AG04450 (cell line): ENCODE measurements at regions of chr10 and their contacts with region 1.

Region 1: GRCh38 chr10:63720072-63720537 is 198.9 kb downstream of the REEP3 start:
- DNase-seq: no peak
- H3K4me3 ChIP-seq: no peak overlapping the region
- H3K27ac ChIP-seq: no peak overlapping the region
- H3K27me3 ChIP-seq: no peaks in the 10 kb centered on the region
- CTCF ChIP-seq: peak; percentile 98

Region 2: DNA sequence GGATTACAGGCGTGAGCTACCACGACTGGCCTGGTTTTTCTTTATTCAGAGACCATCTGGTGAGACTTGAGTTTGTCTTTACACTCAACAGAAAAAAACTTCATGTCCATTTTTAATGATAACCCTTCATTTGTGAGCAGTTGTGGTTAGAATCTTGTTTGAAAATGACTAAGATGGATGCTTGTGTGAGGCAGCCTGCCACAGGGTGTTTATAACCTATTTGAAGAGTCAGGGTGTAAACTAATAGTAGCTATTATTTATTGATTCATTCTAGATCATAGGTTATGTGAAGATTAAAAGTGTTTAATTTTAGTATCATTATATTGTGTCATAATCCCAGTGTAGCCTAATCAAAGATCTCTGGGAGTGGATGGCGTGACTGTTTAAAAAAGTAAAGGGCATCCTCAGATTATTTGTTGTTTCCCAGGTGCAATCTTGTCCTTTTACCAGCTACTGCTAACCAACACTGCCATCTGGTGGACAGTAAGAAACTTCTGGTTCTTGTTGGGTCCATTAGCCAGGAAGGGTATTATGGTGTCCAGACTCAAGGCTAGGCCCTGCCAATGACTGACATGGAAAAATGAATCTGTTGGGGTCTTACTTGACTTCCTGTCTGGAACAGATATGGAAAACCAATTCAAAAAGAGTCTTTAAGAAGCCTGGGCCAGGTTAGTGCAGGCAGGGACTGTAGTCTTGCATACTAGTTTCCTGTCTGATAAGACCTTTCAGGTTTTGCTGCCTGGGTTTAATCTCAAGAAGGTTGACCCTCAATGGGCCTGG is 562.1 kb before region 1 on chr10:
- CTCF ChIA-PET with region 1: interaction called, 363 read pairs
- POLR2A ChIA-PET with region 1: no interaction called
- DNase-seq: peak; percentile 86
- H3K4me3 ChIP-seq: no peak overlapping the region
- H3K27ac ChIP-seq: no peak overlapping the region
- H3K27me3 ChIP-seq: no peaks in the 10 kb centered on the region
- CTCF ChIP-seq: peak; percentile 79

Region 3: GRCh38 chr10:63197344-63198106 is 522.6 kb before region 1 on chr10:
- CTCF ChIA-PET with region 1: interaction called, 16 read pairs
- POLR2A ChIA-PET with region 1: no interaction called
- DNase-seq: peak; percentile 80
- H3K4me3 ChIP-seq: no peak overlapping the region
- H3K27ac ChIP-seq: no peak overlapping the region
- H3K27me3 ChIP-seq: no peaks in the 10 kb centered on the region
- CTCF ChIP-seq: no peak

Region 4: DNA sequence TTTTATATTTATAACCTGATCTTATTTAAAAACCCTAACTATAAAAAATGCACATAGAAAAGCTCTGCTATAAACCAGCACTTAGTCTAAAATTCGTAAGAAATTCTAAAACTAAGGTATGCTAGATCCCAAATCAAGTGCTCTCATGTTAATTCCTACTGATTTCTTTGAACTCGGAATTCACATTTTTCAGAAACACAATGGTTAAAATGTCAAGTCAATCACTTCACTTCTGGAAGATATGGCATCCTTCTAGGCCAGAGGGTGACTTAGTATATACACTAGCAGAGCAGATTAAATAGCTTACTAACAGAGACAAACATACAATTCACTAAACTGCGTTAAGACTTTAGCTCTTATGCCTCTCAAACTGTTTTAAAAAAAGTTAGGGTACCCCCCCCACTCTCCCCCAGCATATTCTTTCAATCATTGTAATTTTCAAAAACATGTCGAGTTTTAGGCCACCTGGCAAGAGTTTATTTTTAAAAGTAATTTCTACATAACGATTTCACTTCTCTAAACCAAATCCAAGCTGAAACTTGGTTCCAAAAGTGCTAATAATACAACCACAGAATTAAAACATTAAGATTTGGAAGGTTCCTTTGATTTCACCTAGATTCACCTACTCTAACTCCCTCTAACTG is 457.6 kb before region 1 on chr10:
- CTCF ChIA-PET with region 1: interaction called, 10 read pairs
- POLR2A ChIA-PET with region 1: no interaction called
- DNase-seq: no peak
- H3K4me3 ChIP-seq: no peak overlapping the region
- H3K27ac ChIP-seq: no peak overlapping the region
- H3K27me3 ChIP-seq: no peaks in the 10 kb centered on the region
- CTCF ChIP-seq: no peak

Region 5: DNA sequence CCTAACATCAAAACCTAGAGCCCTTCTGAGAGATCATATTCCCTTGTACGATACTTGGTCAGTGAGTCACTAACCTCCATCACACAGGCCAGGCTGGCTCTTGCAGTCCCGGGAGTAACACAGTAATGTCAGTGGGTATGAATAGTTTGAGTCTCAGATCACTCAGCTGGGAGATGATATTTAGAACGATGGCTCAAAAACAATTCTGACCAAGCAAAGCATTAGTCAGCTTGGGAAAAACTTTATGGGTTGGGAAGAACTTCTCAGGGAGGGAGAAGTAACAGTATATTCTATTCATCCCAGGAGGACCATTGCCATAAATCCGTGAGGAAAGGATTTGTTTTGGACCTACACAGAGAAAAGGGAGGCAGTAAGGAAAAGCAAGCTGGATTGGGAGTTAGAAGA is 19.9 kb before region 1 on chr10:
- CTCF ChIA-PET with region 1: interaction called, 16 read pairs
- POLR2A ChIA-PET with region 1: no interaction called
- DNase-seq: peak; percentile 92
- H3K4me3 ChIP-seq: no peak overlapping the region
- H3K27ac ChIP-seq: peak overlapping the region; percentile 74
- H3K27me3 ChIP-seq: no peaks in the 10 kb centered on the region
- CTCF ChIP-seq: no peak

Region 6: GRCh38 chr10:63767138-63767801 is 47.2 kb after region 1 on chr10:
- CTCF ChIA-PET with region 1: interaction called, 21 read pairs
- POLR2A ChIA-PET with region 1: no interaction called
- DNase-seq: no peak
- H3K4me3 ChIP-seq: no peak overlapping the region
- H3K27ac ChIP-seq: no peak overlapping the region
- H3K27me3 ChIP-seq: no peaks in the 10 kb centered on the region
- CTCF ChIP-seq: peak; percentile 54

Region 7: DNA sequence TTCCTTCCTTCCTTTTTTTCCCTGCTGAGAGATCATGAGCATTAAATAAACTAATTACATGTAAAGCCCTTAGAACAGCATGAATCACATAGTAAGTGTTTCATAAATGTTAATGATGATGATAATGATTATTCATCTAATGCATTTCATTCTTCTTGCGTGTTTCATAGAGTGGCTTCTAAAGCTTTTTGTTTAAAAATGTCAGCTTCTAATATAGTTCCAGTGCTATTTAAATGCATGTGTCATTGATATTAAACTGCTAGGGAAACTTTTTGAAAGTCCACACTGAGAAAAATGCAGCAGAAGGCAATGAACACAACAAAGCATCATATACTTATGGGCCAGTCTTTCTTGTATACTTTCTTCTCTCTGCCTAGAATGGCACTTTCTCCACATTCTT is 695.9 kb after region 1 on chr10:
- CTCF ChIA-PET with region 1: no interaction called
- POLR2A ChIA-PET with region 1: no interaction called
- DNase-seq: no peak
- H3K4me3 ChIP-seq: no peak overlapping the region
- H3K27ac ChIP-seq: no peak overlapping the region
- H3K27me3 ChIP-seq: no peaks in the 10 kb centered on the region
- CTCF ChIP-seq: no peak